ENCODE measurements at regions of chr1 and their contacts with region 1.

Region 1: DNA sequence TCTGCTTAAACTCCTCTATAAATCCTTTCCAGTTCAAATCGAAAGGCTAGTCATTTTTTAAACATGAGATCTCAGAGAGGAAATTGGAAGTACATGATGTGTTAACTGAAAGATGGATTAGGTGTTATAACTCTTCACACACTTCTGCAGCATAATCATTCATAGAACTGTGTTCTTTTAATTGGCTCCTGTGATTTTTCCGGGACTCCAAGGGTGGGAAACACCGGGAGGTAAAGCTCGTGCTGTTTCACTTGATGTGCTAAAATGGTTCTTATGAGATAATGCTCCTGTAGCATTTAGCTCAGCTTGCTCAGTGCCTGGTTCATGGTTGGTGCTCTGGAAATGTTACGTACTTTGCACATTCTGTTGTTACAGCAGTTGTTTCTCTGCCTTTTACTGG is 40.2 kb downstream of the CC2D1B start:
- DNase-seq: no peak
- ATAC-seq: no peak
- H3K4me3 ChIP-seq: no peak overlapping the region
- H3K4me3 Mint-ChIP-seq: no peak overlapping the region
- H3K27ac ChIP-seq: no peak overlapping the region
- H3K27ac Mint-ChIP-seq: no peak overlapping the region
- H3K4me1 ChIP-seq: no peaks in the 10 kb centered on the region
- H3K4me1 Mint-ChIP-seq: no peaks in the 10 kb centered on the region
- H3K27me3 ChIP-seq: no peaks in the 10 kb centered on the region
- H3K27me3 Mint-ChIP-seq: no peaks in the 10 kb centered on the region
- CTCF ChIP-seq: no peak

Region 2: GRCh38 chr1:50603274-50604271 is 1722.2 kb before region 1 on chr1:
- CTCF ChIA-PET with region 1: no interaction called
- POLR2A ChIA-PET with region 1: no interaction called
- intact Hi-C with region 1: no loop called
- DNase-seq: no peak
- ATAC-seq: no peak
- H3K4me3 ChIP-seq: no peak overlapping the region
- H3K4me3 Mint-ChIP-seq: no peak overlapping the region
- H3K27ac ChIP-seq: no peak overlapping the region
- H3K27ac Mint-ChIP-seq: no peak overlapping the region
- H3K4me1 ChIP-seq: no peaks in the 10 kb centered on the region
- H3K4me1 Mint-ChIP-seq: no peaks in the 10 kb centered on the region
- H3K27me3 ChIP-seq: no peaks in the 10 kb centered on the region
- H3K27me3 Mint-ChIP-seq: no peaks in the 10 kb centered on the region
- CTCF ChIP-seq: no peak

Region 3: GRCh38 chr1:51926171-51926812 is 399.5 kb before region 1 on chr1:
- CTCF ChIA-PET with region 1: no interaction called
- POLR2A ChIA-PET with region 1: no interaction called
- intact Hi-C with region 1: no loop called
- DNase-seq: peak in 2 of 9 experiments; percentile 4 to 13
- ATAC-seq: no peak
- H3K4me3 ChIP-seq: no peak overlapping the region
- H3K4me3 Mint-ChIP-seq: no peak overlapping the region
- H3K27ac ChIP-seq: no peak overlapping the region
- H3K27ac Mint-ChIP-seq: no peak overlapping the region
- H3K4me1 ChIP-seq: no peaks in the 10 kb centered on the region
- H3K4me1 Mint-ChIP-seq: no peaks in the 10 kb centered on the region
- H3K27me3 ChIP-seq: no peaks in the 10 kb centered on the region
- H3K27me3 Mint-ChIP-seq: peaks cover 7% of the 10 kb centered on the region
- CTCF ChIP-seq: no peak

Region 4: DNA sequence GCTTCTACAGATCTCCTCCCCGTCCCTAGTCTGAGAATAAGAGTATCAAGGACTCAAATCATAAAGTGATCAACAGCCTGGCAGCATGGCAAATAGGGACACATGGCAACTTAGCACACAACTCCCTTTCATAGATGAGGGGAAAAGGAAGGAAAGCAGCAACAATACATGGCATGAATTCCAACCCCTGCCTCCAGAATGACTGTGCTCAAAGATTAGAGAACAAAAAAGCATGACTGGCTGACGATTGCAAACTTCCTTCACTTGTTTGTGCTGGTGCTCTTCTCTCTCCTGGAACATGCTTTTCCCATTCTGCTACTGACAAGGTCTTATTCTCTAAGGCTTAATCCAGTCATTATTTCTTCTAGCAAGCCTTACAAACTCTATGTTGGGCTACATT is 303.7 kb before region 1 on chr1:
- CTCF ChIA-PET with region 1: no interaction called
- POLR2A ChIA-PET with region 1: no interaction called
- intact Hi-C with region 1: no loop called
- DNase-seq: no peak
- ATAC-seq: no peak
- H3K4me3 ChIP-seq: no peak overlapping the region
- H3K4me3 Mint-ChIP-seq: no peak overlapping the region
- H3K27ac ChIP-seq: no peak overlapping the region
- H3K27ac Mint-ChIP-seq: no peak overlapping the region
- H3K4me1 ChIP-seq: no peaks in the 10 kb centered on the region
- H3K4me1 Mint-ChIP-seq: no peaks in the 10 kb centered on the region
- H3K27me3 ChIP-seq: no peaks in the 10 kb centered on the region
- H3K27me3 Mint-ChIP-seq: no peaks in the 10 kb centered on the region
- CTCF ChIP-seq: no peak

Region 5: DNA sequence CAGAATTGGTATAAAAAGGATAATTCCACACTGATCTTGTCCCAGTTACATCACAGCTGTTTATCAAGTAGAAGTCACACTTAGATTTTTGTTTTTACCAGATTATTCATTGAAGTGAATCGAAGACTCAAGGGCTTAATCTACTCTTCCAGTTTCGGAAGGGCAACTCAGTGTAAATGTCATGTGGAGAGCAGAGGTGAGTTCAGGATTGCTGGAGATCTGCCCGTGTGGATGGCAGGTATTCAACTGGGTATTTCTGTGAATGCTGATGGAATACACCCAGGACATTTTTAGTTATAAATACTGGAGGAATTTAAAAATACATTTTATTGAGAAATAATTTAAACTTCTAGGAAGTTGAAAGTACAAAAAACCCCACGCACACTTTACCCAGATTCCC is 20.9 kb after region 1 on chr1:
- CTCF ChIA-PET with region 1: no interaction called
- POLR2A ChIA-PET with region 1: no interaction called
- intact Hi-C with region 1: loop called in 1 of 2 experiments (anchors 1 kb)
- DNase-seq: no peak
- ATAC-seq: no peak
- H3K4me3 ChIP-seq: no peak overlapping the region
- H3K4me3 Mint-ChIP-seq: no peak overlapping the region
- H3K27ac ChIP-seq: no peak overlapping the region
- H3K27ac Mint-ChIP-seq: peak overlapping the region; percentile 4
- H3K4me1 ChIP-seq: no peaks in the 10 kb centered on the region
- H3K4me1 Mint-ChIP-seq: peaks cover 5% of the 10 kb centered on the region
- H3K27me3 ChIP-seq: no peaks in the 10 kb centered on the region
- H3K27me3 Mint-ChIP-seq: no peaks in the 10 kb centered on the region
- CTCF ChIP-seq: no peak

Measured in CD8-positive, alpha-beta T cell (primary cell).